ENCODE measurements at regions of chr6 and their contacts with region 1.

Region 1: GRCh38 chr6:137975188-137975940 is 108.3 kb downstream of the TNFAIP3 start:
- DNase-seq: peak in 14 of 35 experiments; percentile 6 to 78 (median 20)
- ATAC-seq: peak; percentile 64 to 91 (median 77)
- H3K4me3 ChIP-seq: no peak overlapping the region
- H3K4me3 Mint-ChIP-seq: peak overlapping the region; percentile 67 to 71 (median 67)
- H3K27ac ChIP-seq: peak overlapping the region; percentile 93
- H3K27ac Mint-ChIP-seq: peak overlapping the region; percentile 96 to 97
- H3K4me1 ChIP-seq: peaks cover 19 to 39% of the 10 kb centered on the region in 2 experiments
- H3K4me1 Mint-ChIP-seq: peaks cover 34 to 43% (median 42%) of the 10 kb centered on the region in 3 donors
- H3K27me3 ChIP-seq: no peaks in the 10 kb centered on the region
- H3K27me3 Mint-ChIP-seq: no peaks in the 10 kb centered on the region

Region 2: DNA sequence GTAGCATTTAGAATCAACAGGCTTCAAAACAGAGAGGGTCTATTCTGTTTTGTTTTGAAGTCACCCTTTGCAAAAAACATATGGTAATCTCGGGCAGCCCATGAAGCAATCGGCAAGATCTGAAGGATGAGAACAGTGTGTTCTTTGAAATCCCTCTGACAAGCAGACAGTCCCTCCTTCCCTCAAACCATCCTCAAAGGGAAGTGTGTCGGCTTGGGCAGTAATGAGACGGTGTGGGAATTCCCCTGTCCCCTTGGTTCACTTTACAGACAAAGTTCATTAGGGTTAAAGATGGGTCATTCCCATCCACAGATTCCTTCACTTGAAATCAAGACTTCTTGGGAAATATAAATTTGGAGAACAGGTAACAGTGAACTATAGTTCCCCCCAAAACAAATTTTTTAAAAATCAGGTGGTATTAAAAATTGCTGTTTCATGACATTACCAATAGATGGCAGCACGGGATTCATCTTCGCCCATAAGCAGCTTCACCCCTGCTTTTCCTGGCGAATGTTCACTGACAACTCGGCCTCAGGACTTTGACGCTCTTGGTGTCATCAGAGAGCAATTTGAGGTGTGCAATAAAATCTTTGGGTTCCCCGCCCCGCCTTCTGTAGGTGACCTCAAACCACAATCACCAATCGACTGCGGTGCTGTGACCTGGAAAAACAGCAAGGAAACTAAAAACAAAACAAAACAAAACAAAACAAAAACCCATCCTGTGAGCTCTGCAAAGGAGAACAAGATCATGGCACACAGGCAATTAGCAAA is 267.6 kb before region 1 on chr6:
- CTCF ChIA-PET with region 1: interaction called, 5 to 16 read pairs
- POLR2A ChIA-PET with region 1: interaction called, 6 to 7 read pairs
- DNase-seq: peak; percentile 57 to 96 (median 88)
- ATAC-seq: peak; percentile 76 to 83 (median 80)
- H3K4me3 ChIP-seq: no peak overlapping the region
- H3K4me3 Mint-ChIP-seq: peak overlapping the region; percentile 44 to 71 (median 55)
- H3K27ac ChIP-seq: peak overlapping the region; percentile 90
- H3K27ac Mint-ChIP-seq: peak overlapping the region; percentile 96 to 98
- H3K4me1 ChIP-seq: peaks cover 19 to 48% of the 10 kb centered on the region in 2 experiments
- H3K4me1 Mint-ChIP-seq: peaks cover 45 to 68% (median 57%) of the 10 kb centered on the region in 3 donors
- H3K27me3 ChIP-seq: no peaks in the 10 kb centered on the region
- H3K27me3 Mint-ChIP-seq: no peaks in the 10 kb centered on the region

Region 3: GRCh38 chr6:137933696-137934095 is 41.7 kb before region 1 on chr6:
- CTCF ChIA-PET with region 1: no interaction called
- POLR2A ChIA-PET with region 1: no interaction called
- DNase-seq: no peak
- ATAC-seq: no peak
- H3K4me3 ChIP-seq: no peak overlapping the region
- H3K4me3 Mint-ChIP-seq: no peak overlapping the region
- H3K27ac ChIP-seq: no peak overlapping the region
- H3K27ac Mint-ChIP-seq: no peak overlapping the region
- H3K4me1 ChIP-seq: peaks cover under 1 to 2% of the 10 kb centered on the region in 2 experiments
- H3K4me1 Mint-ChIP-seq: peaks cover 2 to 4% (median 3%) of the 10 kb centered on the region in 3 donors
- H3K27me3 ChIP-seq: no peaks in the 10 kb centered on the region
- H3K27me3 Mint-ChIP-seq: no peaks in the 10 kb centered on the region

Measured in T-cell (primary cell).